ENCODE measurements at regions of chr9 and their contacts with region 1.

Region 1: DNA sequence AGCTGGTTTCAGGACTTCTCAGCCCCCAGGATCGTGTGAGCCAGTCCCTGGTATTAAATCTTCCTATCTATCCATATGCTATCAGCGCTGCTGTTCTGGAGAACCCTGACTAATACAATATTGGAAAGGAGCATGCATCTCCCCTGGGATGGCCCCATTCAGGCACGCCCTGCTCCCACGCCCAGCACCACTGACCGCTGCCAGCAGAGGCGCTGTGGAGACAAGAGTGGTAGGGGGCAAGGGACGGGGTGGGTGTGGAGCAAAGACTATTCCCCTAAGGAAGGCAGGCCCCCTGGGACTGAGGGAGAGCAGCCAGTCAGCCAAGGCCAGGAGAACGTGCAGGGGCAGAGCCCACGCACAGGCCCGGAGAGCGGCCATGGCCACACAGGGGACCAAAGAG is 116.0 kb downstream of the VAV2 start:
- DNase-seq: no peak
- ATAC-seq: no peak
- H3K4me3 ChIP-seq: no peak overlapping the region
- H3K27ac ChIP-seq: no peak overlapping the region
- H3K4me1 ChIP-seq: peaks cover 20% of the 10 kb centered on the region
- H3K27me3 ChIP-seq: no peaks in the 10 kb centered on the region
- CTCF ChIP-seq: no peak

Region 2: DNA sequence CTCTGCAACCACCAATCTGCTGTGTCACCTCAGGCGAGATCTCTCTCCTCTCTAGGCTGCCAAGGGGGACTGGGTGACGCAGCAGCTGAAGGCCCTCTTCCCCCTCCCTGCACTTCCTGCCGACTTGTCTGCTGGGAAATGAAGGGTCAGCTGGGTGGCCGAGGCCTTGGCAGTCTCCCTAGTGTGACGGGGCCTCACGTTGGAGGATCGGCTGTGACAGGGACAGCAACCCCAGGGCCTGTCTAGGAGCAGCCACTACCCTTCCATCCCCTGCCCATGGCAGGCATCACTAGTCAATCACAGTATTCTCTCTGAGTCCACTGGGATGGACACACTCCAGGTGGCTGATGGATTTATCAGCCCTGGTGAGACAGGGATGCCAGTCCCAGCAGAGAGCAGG is 30.7 kb before region 1 on chr9:
- CTCF ChIA-PET with region 1: interaction called, 10 read pairs
- POLR2A ChIA-PET with region 1: no interaction called
- in situ Hi-C with region 1: no loop called
- intact Hi-C with region 1: no loop called
- DNase-seq: no peak
- ATAC-seq: peak; percentile 55; the same call in 1 of the 2 replicates
- H3K4me3 ChIP-seq: no peak overlapping the region
- H3K27ac ChIP-seq: no peak overlapping the region
- H3K4me1 ChIP-seq: no peaks in the 10 kb centered on the region
- H3K27me3 ChIP-seq: no peaks in the 10 kb centered on the region
- CTCF ChIP-seq: no peak

Region 3: DNA sequence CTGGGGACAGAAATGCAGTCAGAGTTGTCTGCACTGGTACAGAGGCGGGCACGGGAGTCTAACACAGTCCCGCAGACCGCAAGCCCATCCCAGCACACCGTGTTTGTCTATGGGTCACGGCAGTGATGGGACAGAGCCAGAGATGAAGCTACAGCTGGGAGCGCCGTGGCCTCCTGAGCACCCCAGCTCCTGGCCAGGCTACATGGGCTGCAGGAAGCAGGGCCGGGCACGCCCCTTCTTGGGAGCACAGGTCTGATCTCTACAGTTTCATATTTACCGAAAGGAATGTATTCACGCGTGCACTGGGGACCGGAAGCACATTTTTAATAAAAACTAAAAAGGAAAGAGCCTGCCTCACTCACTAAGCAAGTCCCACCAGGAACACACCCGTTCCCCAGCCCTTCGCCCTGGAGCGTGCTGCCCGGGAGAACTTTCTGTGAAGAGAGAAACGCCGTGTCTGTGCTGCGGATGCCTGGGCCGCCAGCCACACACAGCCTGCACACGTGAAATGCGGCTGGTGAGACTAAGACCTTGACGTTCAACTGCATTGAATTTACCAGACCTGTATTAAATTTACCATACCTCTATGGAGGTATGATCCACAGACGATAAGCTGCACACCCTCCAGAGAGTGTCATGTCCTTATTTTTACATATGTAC is 34.8 kb after region 1 on chr9:
- CTCF ChIA-PET with region 1: no interaction called
- POLR2A ChIA-PET with region 1: no interaction called
- in situ Hi-C with region 1: no loop called
- intact Hi-C with region 1: no loop called
- DNase-seq: no peak
- ATAC-seq: no peak
- H3K4me3 ChIP-seq: no peak overlapping the region
- H3K27ac ChIP-seq: no peak overlapping the region
- H3K4me1 ChIP-seq: no peaks in the 10 kb centered on the region
- H3K27me3 ChIP-seq: no peaks in the 10 kb centered on the region
- CTCF ChIP-seq: no peak

Region 4: GRCh38 chr9:134014946-134015345 is 138.8 kb after region 1 on chr9:
- CTCF ChIA-PET with region 1: no interaction called
- POLR2A ChIA-PET with region 1: no interaction called
- in situ Hi-C with region 1: no loop called
- intact Hi-C with region 1: no loop called
- DNase-seq: no peak
- ATAC-seq: no peak
- H3K4me3 ChIP-seq: no peak overlapping the region
- H3K27ac ChIP-seq: no peak overlapping the region
- H3K4me1 ChIP-seq: no peaks in the 10 kb centered on the region
- H3K27me3 ChIP-seq: no peaks in the 10 kb centered on the region
- CTCF ChIP-seq: no peak

Region 5: DNA sequence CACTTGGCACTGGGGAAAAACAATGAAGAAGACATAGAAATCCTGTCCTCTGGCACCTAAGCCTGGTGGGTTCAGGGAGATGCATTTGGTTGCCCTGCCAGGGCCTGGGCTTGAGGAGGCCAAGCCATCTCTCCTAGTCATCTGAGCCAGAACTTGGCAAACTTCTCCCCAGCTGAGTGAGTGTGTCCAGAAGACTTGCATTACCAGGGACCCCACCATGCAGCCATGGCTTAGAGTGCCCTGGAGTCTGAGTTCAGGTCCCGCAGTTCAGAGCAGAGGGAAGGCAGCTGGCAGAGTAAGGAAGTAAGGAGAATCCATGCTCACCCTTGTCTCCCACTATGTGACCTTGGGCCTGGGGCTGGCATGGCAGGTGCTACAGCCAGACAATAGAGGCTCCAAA is 1079.0 kb after region 1 on chr9:
- CTCF ChIA-PET with region 1: no interaction called
- POLR2A ChIA-PET with region 1: interaction called, 12 read pairs
- in situ Hi-C with region 1: no loop called
- intact Hi-C with region 1: no loop called
- DNase-seq: no peak
- ATAC-seq: no peak
- H3K4me3 ChIP-seq: no peak overlapping the region
- H3K27ac ChIP-seq: no peak overlapping the region
- H3K4me1 ChIP-seq: no peaks in the 10 kb centered on the region
- H3K27me3 ChIP-seq: no peaks in the 10 kb centered on the region
- CTCF ChIP-seq: no peak

Measured in Panc1 (cell line).